Endothelial cell of umbilical vein (primary cell): ENCODE measurements at regions of chr12 and their contacts with region 1.

Region 1: DNA sequence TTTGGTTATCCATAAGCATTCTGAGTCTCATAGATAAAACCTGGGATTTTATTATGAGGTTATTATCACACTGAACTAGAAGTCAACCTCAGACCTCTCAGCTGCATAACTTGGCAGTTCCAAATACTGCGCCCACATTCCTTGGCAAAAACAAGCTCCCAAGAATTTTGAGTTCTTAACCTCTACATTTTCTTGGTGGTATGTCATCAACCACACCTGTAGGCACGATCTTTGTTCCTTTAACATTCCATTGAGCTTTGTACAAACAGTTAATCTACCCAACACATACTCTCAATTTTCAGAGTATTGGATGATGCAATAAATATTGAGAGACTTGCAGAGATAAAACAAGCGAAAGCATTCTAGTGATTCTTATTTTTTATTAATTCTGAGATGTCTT is 371.8 kb upstream of the PRICKLE1 start:
- DNase-seq: peak; percentile 89
- H3K4me3 ChIP-seq: no peak overlapping the region
- H3K27ac ChIP-seq: peak overlapping the region; percentile 81
- H3K4me1 ChIP-seq: peaks cover 72% of the 10 kb centered on the region
- H3K27me3 ChIP-seq: no peaks in the 10 kb centered on the region
- CTCF ChIP-seq: no peak
- POLR2A ChIP-seq: peak; percentile 81

Region 2: DNA sequence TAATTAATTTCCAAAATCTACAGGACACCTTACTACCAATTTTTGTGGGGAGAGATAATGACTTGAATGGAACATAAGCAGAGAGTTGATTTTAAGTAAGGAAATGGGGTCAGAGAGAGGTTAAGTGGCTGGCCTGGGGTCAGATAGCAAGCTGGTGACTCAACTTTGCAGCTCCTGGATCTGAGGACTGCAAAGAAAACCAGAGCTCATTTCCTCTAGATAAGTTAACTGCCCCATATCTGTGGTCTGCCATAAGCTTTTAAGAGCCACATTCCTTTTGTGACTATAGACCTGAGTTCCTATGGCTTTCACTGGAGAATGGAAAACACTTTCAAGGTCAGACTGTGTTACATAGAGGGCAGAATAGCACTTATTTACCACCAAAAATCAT is 170.6 kb before region 1 on chr12:
- CTCF ChIA-PET with region 1: interaction called, 13 read pairs
- POLR2A ChIA-PET with region 1: interaction called, 10 read pairs
- dilution Hi-C with region 1: no loop called
- intact Hi-C with region 1: loop called (anchors 1 kb)
- DNase-seq: peak; percentile 96
- H3K4me3 ChIP-seq: peak overlapping the region in 1 of 3 experiments; percentile 2
- H3K27ac ChIP-seq: peak overlapping the region; percentile 75
- H3K4me1 ChIP-seq: peaks cover 32% of the 10 kb centered on the region
- H3K27me3 ChIP-seq: no peaks in the 10 kb centered on the region
- CTCF ChIP-seq: no peak
- POLR2A ChIP-seq: peak; percentile 60

Region 3: GRCh38 chr12:42982828-42983227 is 21.4 kb after region 1 on chr12:
- CTCF ChIA-PET with region 1: no interaction called
- POLR2A ChIA-PET with region 1: no interaction called
- dilution Hi-C with region 1: no loop called
- intact Hi-C with region 1: no loop called
- DNase-seq: no peak
- H3K4me3 ChIP-seq: no peak overlapping the region
- H3K27ac ChIP-seq: no peak overlapping the region
- H3K4me1 ChIP-seq: peaks cover 7% of the 10 kb centered on the region
- H3K27me3 ChIP-seq: no peaks in the 10 kb centered on the region
- CTCF ChIP-seq: no peak
- POLR2A ChIP-seq: no peak

Region 4: DNA sequence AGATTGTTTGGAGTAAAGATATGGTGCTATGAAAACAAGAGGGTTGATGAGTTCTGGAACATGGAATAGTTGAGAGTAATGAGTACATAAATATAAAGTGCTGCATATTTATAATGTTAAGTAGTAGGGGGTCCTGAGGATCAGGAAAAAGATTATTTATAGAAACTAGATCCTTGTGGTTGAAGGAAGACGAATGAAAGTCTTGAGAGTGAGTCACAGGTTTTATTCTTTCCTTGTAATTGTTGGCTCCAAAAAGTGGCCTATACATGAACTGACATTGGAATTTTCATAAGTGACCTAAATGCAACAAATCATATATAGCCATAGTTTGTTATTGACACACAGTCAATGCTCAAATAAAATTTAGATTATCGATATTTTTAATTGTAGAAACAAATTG is 68.6 kb after region 1 on chr12:
- CTCF ChIA-PET with region 1: no interaction called
- POLR2A ChIA-PET with region 1: no interaction called
- dilution Hi-C with region 1: no loop called
- intact Hi-C with region 1: loop called (anchors 2 kb)
- DNase-seq: peak; percentile 69
- H3K4me3 ChIP-seq: no peak overlapping the region
- H3K27ac ChIP-seq: peak overlapping the region; percentile 50
- H3K4me1 ChIP-seq: peaks cover 24% of the 10 kb centered on the region
- H3K27me3 ChIP-seq: no peaks in the 10 kb centered on the region
- CTCF ChIP-seq: no peak
- POLR2A ChIP-seq: no peak